ENCODE measurements at regions of chr10 and their contacts with region 1.

Region 1: DNA sequence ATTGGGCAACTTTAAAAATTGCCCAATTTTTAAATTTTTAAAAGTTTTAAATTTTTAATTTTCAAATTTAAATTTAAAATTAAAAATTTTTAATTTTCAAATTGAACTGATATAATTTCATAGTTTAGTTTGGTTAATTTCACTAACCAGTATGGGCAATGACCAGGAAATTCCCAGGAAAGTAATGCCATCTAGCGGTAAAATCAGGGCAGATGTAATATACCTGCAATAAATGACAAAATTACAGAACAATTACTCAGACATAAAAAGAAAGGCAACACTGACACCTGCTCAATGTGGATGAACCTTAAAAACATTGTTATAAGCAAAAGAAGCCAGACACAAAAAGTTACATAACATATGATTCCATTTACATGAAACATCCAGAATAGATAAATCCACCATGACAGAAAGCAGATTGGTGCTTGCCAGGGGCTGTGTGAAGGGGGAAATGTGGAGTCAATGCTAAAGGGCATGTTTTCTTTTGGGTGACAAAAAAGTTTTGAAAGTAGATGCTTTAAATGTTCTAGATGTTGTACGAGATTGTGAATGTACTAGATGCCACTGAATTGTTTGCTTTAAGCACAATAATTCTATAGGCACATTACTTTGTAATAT is 28.6 kb upstream of the SLC16A12 start:
- DNase-seq: no peak
- ATAC-seq: peak; percentile 57
- H3K4me3 Mint-ChIP-seq: no peak overlapping the region
- H3K27ac Mint-ChIP-seq: no peak overlapping the region
- H3K4me1 Mint-ChIP-seq: no peaks in the 10 kb centered on the region
- H3K27me3 Mint-ChIP-seq: peaks cover 14% of the 10 kb centered on the region
- CTCF ChIP-seq: no peak

Region 2: GRCh38 chr10:89029785-89030437 is 534.1 kb before region 1 on chr10:
- CTCF ChIA-PET with region 1: no interaction called
- POLR2A ChIA-PET with region 1: no interaction called
- intact Hi-C with region 1: loop called (anchors 10 kb)
- DNase-seq: peak; percentile 22
- ATAC-seq: peak; percentile 82
- H3K4me3 Mint-ChIP-seq: no peak overlapping the region
- H3K27ac Mint-ChIP-seq: no peak overlapping the region
- H3K4me1 Mint-ChIP-seq: peaks cover 15% of the 10 kb centered on the region
- H3K27me3 Mint-ChIP-seq: no peaks in the 10 kb centered on the region
- CTCF ChIP-seq: peak; percentile 70

Region 3: DNA sequence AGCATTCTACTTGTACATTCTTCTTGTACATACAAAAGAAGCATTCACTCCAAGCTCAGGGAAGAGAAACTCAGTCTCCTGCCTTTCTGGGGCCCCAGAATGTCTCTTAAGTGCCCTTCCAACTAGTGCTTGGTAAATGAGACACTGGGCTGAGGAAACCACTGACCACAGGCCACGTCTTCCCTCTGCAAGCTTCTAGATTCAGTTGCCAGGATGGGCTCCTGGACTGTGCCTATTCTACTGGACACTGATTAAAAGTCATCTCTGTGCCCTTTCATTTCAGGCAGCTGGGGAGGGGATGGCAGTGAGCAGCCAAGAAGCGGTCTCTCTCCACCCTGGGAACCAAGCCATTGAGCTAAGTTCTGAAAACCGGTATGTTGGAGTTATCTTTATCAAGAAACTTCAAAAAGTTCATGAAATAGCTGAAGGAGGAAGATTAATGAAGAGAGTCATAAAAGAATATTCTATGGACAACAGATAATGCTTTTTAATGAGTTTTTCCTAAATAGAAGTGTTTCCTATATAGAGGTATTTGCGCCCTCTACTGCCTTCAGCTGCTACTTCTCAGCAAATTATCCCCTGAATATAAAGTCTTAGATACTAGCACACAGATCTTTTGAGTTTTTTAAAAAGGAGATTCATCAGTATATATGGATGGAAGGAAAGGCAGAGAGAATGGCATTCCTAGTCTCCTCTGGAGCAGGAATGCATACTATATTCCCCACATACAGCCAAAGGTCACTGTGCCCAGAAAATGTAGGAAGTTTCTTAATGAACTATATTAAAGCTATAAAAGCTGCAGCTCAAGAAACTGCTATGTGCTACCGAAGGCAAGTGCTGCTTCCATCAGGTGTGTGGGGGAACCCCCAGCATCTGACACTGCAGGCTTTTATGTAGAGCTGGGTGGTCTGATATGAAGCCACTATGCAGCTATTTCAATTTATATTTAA is 194.5 kb before region 1 on chr10:
- CTCF ChIA-PET with region 1: interaction called, 6 read pairs
- POLR2A ChIA-PET with region 1: no interaction called
- intact Hi-C with region 1: loop called (anchors 2 kb)
- DNase-seq: no peak
- ATAC-seq: no peak
- H3K4me3 Mint-ChIP-seq: no peak overlapping the region
- H3K27ac Mint-ChIP-seq: no peak overlapping the region
- H3K4me1 Mint-ChIP-seq: peaks cover 6% of the 10 kb centered on the region
- H3K27me3 Mint-ChIP-seq: peaks cover 2% of the 10 kb centered on the region
- CTCF ChIP-seq: no peak

Region 4: DNA sequence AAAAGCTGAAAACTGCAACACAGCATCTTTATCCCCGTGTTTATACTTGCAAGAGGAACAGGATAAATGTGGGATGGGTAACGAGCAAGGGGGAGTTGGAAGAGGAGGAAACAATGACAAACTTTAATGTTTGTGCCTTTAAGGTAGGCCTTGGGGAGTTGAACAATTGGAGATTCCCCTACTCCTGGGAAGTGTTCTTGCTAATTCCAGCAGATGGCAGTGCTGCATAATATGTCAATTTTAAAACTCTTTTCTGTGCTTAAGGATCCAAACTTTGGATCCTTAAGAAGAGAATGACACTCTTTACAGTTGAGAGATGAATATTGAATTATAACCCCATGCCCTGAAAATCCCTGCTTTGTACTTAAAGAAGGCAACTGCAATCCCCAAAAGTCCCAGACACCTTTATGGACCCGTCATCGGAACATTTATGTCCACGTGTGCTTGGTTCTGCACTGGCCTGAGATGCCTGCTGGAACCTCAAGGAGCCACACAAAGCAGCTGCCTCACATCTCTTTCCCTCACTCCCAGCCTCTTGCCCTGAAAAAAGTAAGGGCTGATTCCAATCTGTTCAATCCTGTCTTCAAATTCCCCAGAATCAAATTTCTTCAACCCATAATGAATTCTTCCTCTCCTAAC is 137.6 kb before region 1 on chr10:
- CTCF ChIA-PET with region 1: interaction called, 5 read pairs
- POLR2A ChIA-PET with region 1: no interaction called
- intact Hi-C with region 1: loop called (anchors 1 kb)
- DNase-seq: no peak
- ATAC-seq: peak; percentile 57
- H3K4me3 Mint-ChIP-seq: no peak overlapping the region
- H3K27ac Mint-ChIP-seq: no peak overlapping the region
- H3K4me1 Mint-ChIP-seq: peaks cover 11% of the 10 kb centered on the region
- H3K27me3 Mint-ChIP-seq: no peaks in the 10 kb centered on the region
- CTCF ChIP-seq: no peak

Region 5: DNA sequence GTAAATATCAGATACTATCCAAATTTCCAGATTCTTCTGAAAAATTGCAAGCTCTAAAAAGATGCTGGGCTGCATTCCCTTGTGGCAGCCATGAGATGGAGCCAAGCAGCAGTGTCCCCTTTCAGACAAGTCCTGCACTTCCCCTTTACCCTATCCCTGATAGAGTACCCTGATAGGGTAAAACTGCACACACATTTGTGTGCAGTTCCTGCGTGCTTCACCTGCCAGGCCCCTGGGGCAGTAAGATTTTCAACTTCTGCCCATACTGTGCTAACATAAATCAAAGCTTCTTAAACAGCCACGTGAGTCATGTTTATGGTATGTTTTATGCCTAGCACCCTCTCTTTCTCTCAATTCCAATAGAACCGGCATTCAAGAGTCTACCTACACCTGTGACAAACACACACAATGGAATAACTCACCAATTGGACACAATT is 97.4 kb before region 1 on chr10:
- CTCF ChIA-PET with region 1: no interaction called
- POLR2A ChIA-PET with region 1: no interaction called
- intact Hi-C with region 1: loop called (anchors 2 kb)
- DNase-seq: no peak
- ATAC-seq: peak; percentile 54
- H3K4me3 Mint-ChIP-seq: no peak overlapping the region
- H3K27ac Mint-ChIP-seq: no peak overlapping the region
- H3K4me1 Mint-ChIP-seq: no peaks in the 10 kb centered on the region
- H3K27me3 Mint-ChIP-seq: peaks cover under 1% of the 10 kb centered on the region
- CTCF ChIP-seq: no peak